ENCODE measurements at regions of chr1 and their contacts with region 1.

Region 1: GRCh38 chr1:112501810-112502641 is 6.7 kb upstream of the WNT2B start:
- DNase-seq: peak in 28 of 35 experiments; percentile 28 to 68 (median 42)
- ATAC-seq: peak; percentile 71 to 82 (median 75)
- H3K4me3 ChIP-seq: peak overlapping the region; percentile 31 to 64
- H3K4me3 Mint-ChIP-seq: peak overlapping the region; percentile 55 to 72 (median 64)
- H3K27ac ChIP-seq: no peak overlapping the region
- H3K27ac Mint-ChIP-seq: no peak overlapping the region
- H3K4me1 ChIP-seq: peaks cover 0 to 12% of the 10 kb centered on the region in 2 experiments
- H3K4me1 Mint-ChIP-seq: peaks cover 0 to 8% (median 7%) of the 10 kb centered on the region in 3 donors
- H3K27me3 ChIP-seq: peaks cover 19 to 60% of the 10 kb centered on the region in 2 experiments
- H3K27me3 Mint-ChIP-seq: peaks cover 63 to 71% of the 10 kb centered on the region in 2 donors

Region 2: DNA sequence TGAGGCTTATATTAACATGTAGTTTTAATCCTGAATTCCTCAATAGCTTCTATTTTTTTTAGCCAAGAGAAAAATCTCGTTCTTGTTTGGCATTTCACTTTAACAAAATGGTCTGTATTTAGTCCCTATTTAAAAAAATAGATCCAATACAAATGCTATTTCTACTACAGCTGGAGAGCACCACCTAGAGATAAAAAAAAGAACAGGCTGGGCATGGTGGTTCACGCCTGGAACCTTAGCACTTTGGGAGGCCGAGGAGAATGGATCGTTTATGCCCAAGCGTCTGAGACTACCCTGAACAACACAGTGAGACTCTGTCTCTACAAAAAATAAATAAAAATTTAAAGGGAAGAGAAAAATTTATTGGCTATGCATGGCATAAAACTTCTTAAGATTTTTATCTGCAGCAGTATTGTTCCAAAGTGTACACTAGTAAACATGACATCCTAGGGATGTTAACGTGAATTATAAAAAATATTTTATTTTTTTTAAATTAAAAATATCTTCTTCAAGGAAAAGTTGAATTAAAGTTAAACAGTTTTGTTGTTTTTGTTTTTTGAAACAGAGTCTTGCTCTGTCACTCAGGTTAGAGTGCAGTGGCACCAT is 112.5 kb after region 1 on chr1:
- CTCF ChIA-PET with region 1: interaction called, 4 to 17 read pairs
- POLR2A ChIA-PET with region 1: no interaction called
- DNase-seq: peak in 2 of 35 experiments; percentile 17 to 53
- ATAC-seq: no peak
- H3K4me3 ChIP-seq: no peak overlapping the region
- H3K4me3 Mint-ChIP-seq: no peak overlapping the region
- H3K27ac ChIP-seq: no peak overlapping the region
- H3K27ac Mint-ChIP-seq: no peak overlapping the region
- H3K4me1 ChIP-seq: peaks cover 5 to 12% of the 10 kb centered on the region in 2 experiments
- H3K4me1 Mint-ChIP-seq: peaks cover 15 to 19% (median 17%) of the 10 kb centered on the region in 3 donors
- H3K27me3 ChIP-seq: no peaks in the 10 kb centered on the region
- H3K27me3 Mint-ChIP-seq: no peaks in the 10 kb centered on the region